ENCODE measurements at regions of chr13 and their contacts with region 1.

Region 1: GRCh38 chr13:25267715-25268114 is 19.6 kb downstream of the MTMR6 start:
- DNase-seq: peak in 4 of 9 donors; percentile 11 to 36 (median 23)
- ATAC-seq: peak; percentile 80
- H3K4me3 ChIP-seq: no peak overlapping the region
- H3K4me3 Mint-ChIP-seq: no peak overlapping the region
- H3K27ac ChIP-seq: no peak overlapping the region
- H3K27ac Mint-ChIP-seq: peak overlapping the region in 6 of 9 donors; percentile 1 to 73 (median 28)
- H3K4me1 ChIP-seq: no peaks in the 10 kb centered on the region
- H3K4me1 Mint-ChIP-seq: peaks cover 0 to 28% (median 11%) of the 10 kb centered on the region in 7 donors
- H3K27me3 ChIP-seq: no peaks in the 10 kb centered on the region
- H3K27me3 Mint-ChIP-seq: no peaks in the 10 kb centered on the region

Region 2: GRCh38 chr13:25301347-25302047 is 33.8 kb after region 1 on chr13 and contains the start of gene NUP58:
- CTCF ChIA-PET with region 1: interaction called, 3 read pairs
- POLR2A ChIA-PET with region 1: no interaction called
- intact Hi-C with region 1: loop called in 1 of 2 experiments (anchors 1 kb)
- DNase-seq: peak; percentile 83 to 94 (median 92)
- ATAC-seq: peak; percentile 99
- H3K4me3 ChIP-seq: peak within 1 kb of the TSS; percentile 64
- H3K4me3 Mint-ChIP-seq: peak within 1 kb of the TSS; percentile 86 to 95 (median 92)
- H3K27ac ChIP-seq: peak within 1 kb of the TSS; percentile 93
- H3K27ac Mint-ChIP-seq: peak within 1 kb of the TSS; percentile 87 to 97 (median 93)
- H3K4me1 ChIP-seq: peaks cover 13 to 22% of the 10 kb centered on the region in 2 donors
- H3K4me1 Mint-ChIP-seq: peaks cover 21 to 51% (median 47%) of the 10 kb centered on the region in 7 donors
- H3K27me3 ChIP-seq: peaks cover 0 to 5% of the 10 kb centered on the region in 2 donors
- H3K27me3 Mint-ChIP-seq: peaks cover 7 to 19% (median 10%) of the 10 kb centered on the region in 5 donors
- total RNA-seq, gene NUP58: 41.1 to 89.1 (median 57.0) TPM

Region 3: GRCh38 chr13:25329706-25330105 is 62.0 kb after region 1 on chr13:
- CTCF ChIA-PET with region 1: no interaction called
- POLR2A ChIA-PET with region 1: no interaction called
- intact Hi-C with region 1: loop called in 1 of 2 experiments (anchors 10 kb)
- DNase-seq: no peak
- ATAC-seq: no peak
- H3K4me3 ChIP-seq: no peak overlapping the region
- H3K4me3 Mint-ChIP-seq: no peak overlapping the region
- H3K27ac ChIP-seq: no peak overlapping the region
- H3K27ac Mint-ChIP-seq: no peak overlapping the region
- H3K4me1 ChIP-seq: no peaks in the 10 kb centered on the region
- H3K4me1 Mint-ChIP-seq: peaks cover 0 to 14% (median 4%) of the 10 kb centered on the region in 7 donors
- H3K27me3 ChIP-seq: no peaks in the 10 kb centered on the region
- H3K27me3 Mint-ChIP-seq: no peaks in the 10 kb centered on the region

Region 4: DNA sequence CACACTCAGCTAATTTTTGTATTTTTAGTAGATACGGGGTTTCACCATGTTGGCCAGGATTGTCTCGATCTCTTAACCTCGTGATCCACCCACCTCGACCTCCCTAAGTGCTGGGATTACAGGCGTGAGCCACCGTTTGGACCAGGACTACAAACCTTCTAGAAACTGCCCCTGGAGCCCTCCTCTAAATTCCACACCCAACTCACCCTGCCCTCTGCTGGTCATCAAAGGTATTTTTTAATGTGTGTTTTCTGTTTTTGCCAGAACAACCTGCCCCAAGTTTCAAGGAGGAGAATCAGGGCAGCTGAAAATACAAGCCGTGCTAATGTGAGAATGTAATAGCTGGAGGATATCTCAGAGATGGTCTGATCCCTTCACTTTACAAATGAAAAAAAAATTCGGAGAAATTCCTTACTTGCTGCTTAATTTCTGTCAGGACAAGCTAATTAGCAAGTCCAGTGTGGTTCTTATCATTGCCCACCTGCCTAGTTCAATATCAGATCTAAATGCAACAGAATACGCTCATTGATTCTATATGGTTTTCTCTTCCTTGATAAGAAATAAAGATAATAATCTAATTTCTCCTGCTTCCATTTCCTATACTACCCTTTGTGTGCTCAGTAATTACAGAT is 108.1 kb after region 1 on chr13:
- CTCF ChIA-PET with region 1: interaction called, 9 read pairs
- POLR2A ChIA-PET with region 1: no interaction called
- intact Hi-C with region 1: loop called (anchors 1 to 5 kb)
- DNase-seq: peak in 8 of 9 donors; percentile 8 to 50 (median 30)
- ATAC-seq: peak; percentile 57
- H3K4me3 ChIP-seq: no peak overlapping the region
- H3K4me3 Mint-ChIP-seq: peak overlapping the region in 1 of 10 donors; percentile 35
- H3K27ac ChIP-seq: no peak overlapping the region
- H3K27ac Mint-ChIP-seq: no peak overlapping the region
- H3K4me1 ChIP-seq: no peaks in the 10 kb centered on the region
- H3K4me1 Mint-ChIP-seq: peaks cover 5 to 18% (median 13%) of the 10 kb centered on the region in 7 donors
- H3K27me3 ChIP-seq: peaks cover 0 to 3% of the 10 kb centered on the region in 2 donors
- H3K27me3 Mint-ChIP-seq: peaks cover 51 to 62% (median 57%) of the 10 kb centered on the region in 5 donors

Region 5: GRCh38 chr13:25455146-25455545 is 187.4 kb after region 1 on chr13:
- CTCF ChIA-PET with region 1: no interaction called
- POLR2A ChIA-PET with region 1: no interaction called
- intact Hi-C with region 1: no loop called
- DNase-seq: no peak
- ATAC-seq: no peak
- H3K4me3 ChIP-seq: no peak overlapping the region
- H3K4me3 Mint-ChIP-seq: no peak overlapping the region
- H3K27ac ChIP-seq: no peak overlapping the region
- H3K27ac Mint-ChIP-seq: no peak overlapping the region
- H3K4me1 ChIP-seq: no peaks in the 10 kb centered on the region
- H3K4me1 Mint-ChIP-seq: no peaks in the 10 kb centered on the region
- H3K27me3 ChIP-seq: no peaks in the 10 kb centered on the region
- H3K27me3 Mint-ChIP-seq: peaks cover 10 to 45% (median 31%) of the 10 kb centered on the region in 5 donors